ENCODE measurements at regions of chr6 and their contacts with region 1.

Region 1: GRCh38 chr6:70369332-70369950 is 43.9 kb upstream of the FAM135A start:
- DNase-seq: peak; percentile 75
- H3K4me3 ChIP-seq: no peak overlapping the region
- H3K27ac ChIP-seq: no peak overlapping the region
- H3K4me1 ChIP-seq: peaks cover 0 to 12% (median 2%) of the 10 kb centered on the region in 4 donors
- H3K27me3 ChIP-seq: no peaks in the 10 kb centered on the region
- CTCF ChIP-seq: peak; percentile 81 to 92 (median 87)
- EP300 ChIP-seq: no peak
- POLR2A ChIP-seq: no peak

Region 2: GRCh38 chr6:69705954-69706353 is 663.5 kb before region 1 on chr6:
- in situ Hi-C with region 1: no loop called
- intact Hi-C with region 1: no loop called
- DNase-seq: no peak
- H3K4me3 ChIP-seq: no peak overlapping the region
- H3K27ac ChIP-seq: no peak overlapping the region
- H3K4me1 ChIP-seq: no peaks in the 10 kb centered on the region
- H3K27me3 ChIP-seq: no peaks in the 10 kb centered on the region
- CTCF ChIP-seq: no peak
- EP300 ChIP-seq: no peak
- POLR2A ChIP-seq: no peak

Region 3: DNA sequence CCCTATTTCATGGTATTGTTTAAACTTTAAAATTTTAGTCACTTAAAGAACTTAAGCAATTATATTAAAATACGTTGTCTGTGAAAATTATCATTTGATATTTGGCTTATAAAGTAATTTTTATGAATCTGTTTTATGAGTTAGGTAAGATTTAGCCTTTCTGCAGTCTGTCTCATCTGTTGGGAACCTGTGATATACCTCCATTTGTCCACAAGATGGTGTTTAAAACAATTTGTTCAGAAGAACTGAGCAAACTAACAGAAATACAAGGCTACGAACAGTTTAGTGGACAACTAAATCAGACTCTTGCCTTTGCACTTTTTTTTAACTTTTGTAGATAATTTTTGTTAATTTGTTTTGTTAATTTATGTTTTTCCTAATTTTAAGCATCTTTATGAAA is 159.0 kb before region 1 on chr6:
- in situ Hi-C with region 1: loop called in 1 of 4 experiments (anchors 10 kb)
- intact Hi-C with region 1: no loop called
- DNase-seq: no peak
- H3K4me3 ChIP-seq: no peak overlapping the region
- H3K27ac ChIP-seq: no peak overlapping the region
- H3K4me1 ChIP-seq: no peaks in the 10 kb centered on the region
- H3K27me3 ChIP-seq: no peaks in the 10 kb centered on the region
- CTCF ChIP-seq: peak; percentile 17 to 26 (median 19)
- EP300 ChIP-seq: no peak
- POLR2A ChIP-seq: no peak

Region 4: GRCh38 chr6:70304616-70305015 is 64.8 kb before region 1 on chr6:
- in situ Hi-C with region 1: loop called in 1 of 4 experiments (anchors 5 kb)
- intact Hi-C with region 1: no loop called
- DNase-seq: no peak
- H3K4me3 ChIP-seq: no peak overlapping the region
- H3K27ac ChIP-seq: no peak overlapping the region
- H3K4me1 ChIP-seq: no peaks in the 10 kb centered on the region
- H3K27me3 ChIP-seq: peaks cover 3% of the 10 kb centered on the region
- CTCF ChIP-seq: no peak
- EP300 ChIP-seq: no peak
- POLR2A ChIP-seq: no peak

Region 5: DNA sequence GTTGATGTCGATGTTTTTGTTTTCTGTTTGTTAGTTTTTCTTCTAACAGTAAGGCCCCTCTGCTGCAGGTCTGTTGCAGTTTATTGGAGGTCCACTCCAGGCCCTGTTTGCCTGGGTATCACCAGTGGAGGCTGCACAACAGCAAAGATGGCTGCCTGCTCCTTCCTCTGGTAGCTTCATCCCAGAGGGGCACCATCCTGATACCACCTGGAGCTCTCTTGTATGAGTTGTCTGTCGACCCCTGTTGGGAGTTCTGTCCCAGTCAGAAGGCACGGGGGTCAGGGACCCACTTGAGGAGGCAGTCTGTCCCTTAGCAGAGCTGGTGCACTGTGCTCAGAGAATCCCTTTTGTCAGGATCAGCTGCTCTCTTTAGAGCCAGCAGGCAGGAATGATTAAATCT is 131.2 kb after region 1 on chr6:
- in situ Hi-C with region 1: no loop called
- intact Hi-C with region 1: no loop called
- DNase-seq: no peak
- H3K4me3 ChIP-seq: no peak overlapping the region
- H3K27ac ChIP-seq: no peak overlapping the region
- H3K4me1 ChIP-seq: no peaks in the 10 kb centered on the region
- H3K27me3 ChIP-seq: no peaks in the 10 kb centered on the region
- CTCF ChIP-seq: no peak
- EP300 ChIP-seq: no peak
- POLR2A ChIP-seq: no peak

Measured in transverse colon (tissue), 4 donors.